ENCODE measurements at regions of chr16 and their contacts with region 1.

Region 1: GRCh38 chr16:69386596-69386995 is 789 bp upstream of the TERF2 start:
- H3K4me3 Mint-ChIP-seq: no peak overlapping the region
- H3K27ac Mint-ChIP-seq: no peak overlapping the region
- H3K4me1 Mint-ChIP-seq: peaks cover 28% of the 10 kb centered on the region
- H3K27me3 Mint-ChIP-seq: no peaks in the 10 kb centered on the region

Region 2: DNA sequence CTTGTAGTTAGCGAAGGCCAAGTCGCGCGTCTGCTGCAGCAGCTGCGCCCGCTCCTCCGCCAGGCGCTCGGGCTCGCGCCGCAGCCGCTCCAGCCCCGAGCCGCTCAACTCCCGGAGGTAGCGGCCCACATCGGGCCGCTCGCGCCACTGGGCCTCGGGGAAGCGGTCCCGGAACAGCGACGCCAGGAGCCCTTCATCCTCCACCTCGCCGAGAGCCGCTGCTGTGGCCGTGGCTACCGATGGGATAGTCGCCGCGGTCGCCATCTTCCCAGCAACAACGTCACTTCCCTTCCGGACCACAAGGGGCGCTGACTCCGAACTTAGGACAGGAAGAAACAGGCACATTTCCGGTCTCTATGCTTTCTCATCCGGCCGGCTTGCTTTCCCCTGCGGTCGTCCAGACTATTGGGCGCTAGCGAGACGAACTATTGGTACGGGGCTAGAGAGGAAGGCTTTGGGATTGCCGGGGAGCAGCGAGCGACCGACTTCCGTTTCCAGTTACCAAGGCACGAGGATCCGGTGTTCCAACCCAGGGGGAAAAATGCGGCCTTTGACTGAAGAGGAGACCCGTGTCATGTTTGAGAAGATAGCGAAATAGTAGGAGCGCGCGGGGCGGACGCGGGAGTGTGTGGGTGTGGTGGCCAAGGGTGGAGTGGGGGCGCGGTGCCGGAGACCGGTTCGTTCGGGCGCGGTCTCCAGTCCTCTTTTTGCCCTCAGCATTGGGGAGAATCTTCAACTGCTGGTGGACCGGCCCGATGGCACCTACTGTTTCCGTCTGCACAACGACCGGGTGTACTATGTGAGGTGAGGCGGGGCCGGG is 47.1 kb before region 1 on chr16 and contains the starts of genes COG8 and NIP7:
- intact Hi-C with region 1: loop called (anchors 2 kb)
- H3K4me3 Mint-ChIP-seq: peak within 1 kb of the TSS; percentile 93
- H3K27ac Mint-ChIP-seq: peak within 1 kb of the TSS; percentile 90
- H3K4me1 Mint-ChIP-seq: peaks cover 44% of the 10 kb centered on the region
- H3K27me3 Mint-ChIP-seq: no peaks in the 10 kb centered on the region